Activated CD4-positive, alpha-beta memory T cell treated with anti-CD3 and anti-CD28 coated beads for 36 hours (primary cell): ENCODE measurements at regions of chr22 and their contacts with region 1.

Region 1: GRCh38 chr22:32528984-32529982 is 54.7 kb downstream of the FBXO7 start:
- DNase-seq: peak; percentile 77
- H3K4me3 Mint-ChIP-seq: no peak overlapping the region
- H3K27ac Mint-ChIP-seq: no peak overlapping the region
- H3K4me1 Mint-ChIP-seq: no peaks in the 10 kb centered on the region
- H3K27me3 Mint-ChIP-seq: peaks cover 7% of the 10 kb centered on the region

Region 2: DNA sequence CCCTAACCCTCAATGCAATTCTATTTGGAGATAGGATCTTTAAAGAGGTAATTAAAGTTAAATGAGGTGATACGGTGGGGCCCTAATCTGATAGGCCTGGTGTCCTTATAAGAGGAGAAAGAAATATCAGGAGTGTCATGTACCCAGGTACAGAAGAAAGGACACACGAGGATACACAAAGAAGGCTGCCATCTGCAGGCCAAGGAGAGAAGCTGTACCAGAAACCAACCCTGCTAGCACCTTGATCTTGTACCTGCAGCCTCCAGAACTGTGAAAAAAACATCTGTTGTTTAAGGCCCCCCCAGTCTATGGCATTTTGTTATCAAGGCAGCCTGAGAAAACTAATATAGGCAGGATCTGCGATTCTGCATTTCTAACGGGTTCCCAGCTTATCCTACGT is 10.4 kb before region 1 on chr22:
- CTCF ChIA-PET with region 1: interaction called, 24 read pairs
- POLR2A ChIA-PET with region 1: no interaction called
- intact Hi-C with region 1: no loop called
- DNase-seq: peak; percentile 16
- H3K4me3 Mint-ChIP-seq: no peak overlapping the region
- H3K27ac Mint-ChIP-seq: no peak overlapping the region
- H3K4me1 Mint-ChIP-seq: no peaks in the 10 kb centered on the region
- H3K27me3 Mint-ChIP-seq: no peaks in the 10 kb centered on the region

Region 3: DNA sequence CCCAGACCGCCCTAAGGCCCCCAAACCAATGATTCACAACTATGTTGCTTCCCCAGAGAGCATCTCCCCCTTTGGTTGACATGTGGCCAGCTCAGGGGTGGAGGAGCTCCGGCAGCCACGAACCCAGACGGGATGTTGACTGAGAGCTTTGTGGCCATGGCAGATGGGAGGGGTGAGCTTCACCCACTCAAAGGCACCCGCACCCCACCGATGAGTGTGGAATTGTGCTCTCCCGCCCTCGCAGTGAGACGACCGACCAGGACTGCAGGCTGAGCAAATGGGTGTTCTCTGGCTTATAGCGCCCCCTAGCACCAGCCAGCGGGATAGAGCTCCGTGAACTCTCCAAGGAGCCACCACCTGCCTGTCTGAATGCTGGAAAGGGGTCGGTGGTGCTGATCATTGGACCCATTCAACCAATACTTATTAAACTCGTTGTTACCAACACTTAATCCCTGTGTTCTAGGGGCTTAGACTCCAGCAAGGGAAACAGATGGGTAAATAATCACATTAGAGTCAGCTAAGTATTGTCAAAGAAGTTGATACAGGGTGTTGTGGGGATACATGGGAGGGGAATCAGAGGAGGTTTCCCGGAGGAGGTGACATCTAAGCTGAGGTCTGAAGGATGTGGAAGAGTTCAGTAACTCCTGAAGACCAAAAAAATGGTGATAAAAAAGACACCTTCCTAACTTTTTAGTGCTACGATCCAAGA is 267.7 kb after region 1 on chr22:
- CTCF ChIA-PET with region 1: interaction called, 138 read pairs
- POLR2A ChIA-PET with region 1: no interaction called
- intact Hi-C with region 1: loop called (anchors 2 kb)
- DNase-seq: peak; percentile 67
- H3K4me3 Mint-ChIP-seq: no peak overlapping the region
- H3K27ac Mint-ChIP-seq: no peak overlapping the region
- H3K4me1 Mint-ChIP-seq: peaks cover 2% of the 10 kb centered on the region
- H3K27me3 Mint-ChIP-seq: peaks cover 35% of the 10 kb centered on the region

Region 4: GRCh38 chr22:32985899-32986765 is 456.8 kb after region 1 on chr22:
- CTCF ChIA-PET with region 1: interaction called, 18 read pairs
- POLR2A ChIA-PET with region 1: no interaction called
- intact Hi-C with region 1: no loop called
- DNase-seq: peak; percentile 57
- H3K4me3 Mint-ChIP-seq: no peak overlapping the region
- H3K27ac Mint-ChIP-seq: no peak overlapping the region
- H3K4me1 Mint-ChIP-seq: no peaks in the 10 kb centered on the region
- H3K27me3 Mint-ChIP-seq: peaks cover 4% of the 10 kb centered on the region

Region 5: DNA sequence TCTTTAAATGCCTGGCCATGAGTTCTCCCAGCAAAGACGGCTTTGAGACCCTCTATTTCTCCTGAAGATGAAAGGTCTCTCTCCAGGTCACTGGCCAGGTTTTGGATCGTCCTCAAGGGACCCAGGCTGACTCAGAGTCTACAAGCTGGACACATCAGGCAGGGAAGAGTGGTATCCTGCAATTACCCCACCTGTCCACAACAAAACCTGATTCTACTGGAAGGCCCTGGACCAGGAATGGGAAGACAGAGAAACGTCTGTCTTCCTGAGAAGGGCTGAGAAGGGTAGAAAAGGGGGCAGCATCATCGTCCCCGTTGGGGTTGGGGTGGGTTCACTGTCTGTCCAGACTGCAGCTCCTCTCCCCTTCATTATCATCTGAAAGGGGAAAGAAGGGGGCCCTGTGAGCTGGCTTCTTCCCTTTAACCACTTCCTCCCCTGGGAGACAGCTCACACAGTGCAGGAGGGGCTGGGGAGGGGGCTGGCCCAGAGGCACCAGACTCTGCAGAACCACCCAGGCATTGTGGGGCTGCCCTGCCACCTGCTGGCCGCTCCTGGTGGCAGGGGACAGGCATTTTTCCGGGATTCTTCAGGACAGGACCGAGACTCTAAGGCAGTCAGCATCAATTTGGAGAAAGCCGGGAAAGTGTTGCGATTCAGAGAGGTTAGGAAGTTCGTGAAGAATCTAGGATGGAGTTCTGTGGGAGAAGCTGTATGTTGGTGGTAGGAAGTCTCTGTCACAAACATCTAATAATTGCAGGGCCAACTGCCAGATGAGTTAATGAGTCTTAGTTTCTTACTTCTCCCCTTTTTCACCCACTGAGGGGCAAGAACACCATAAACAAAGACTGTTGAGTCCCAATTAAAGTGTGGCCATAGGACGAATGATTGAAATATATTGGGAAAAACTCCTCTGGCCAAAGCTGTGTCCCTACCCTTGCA is 471.3 kb after region 1 on chr22:
- CTCF ChIA-PET with region 1: interaction called, 6 read pairs
- POLR2A ChIA-PET with region 1: no interaction called
- intact Hi-C with region 1: loop called (anchors 2 kb)
- DNase-seq: peak; percentile 48
- H3K4me3 Mint-ChIP-seq: no peak overlapping the region
- H3K27ac Mint-ChIP-seq: no peak overlapping the region
- H3K4me1 Mint-ChIP-seq: peaks cover 2% of the 10 kb centered on the region
- H3K27me3 Mint-ChIP-seq: peaks cover 1% of the 10 kb centered on the region